A549 (cell line): ENCODE measurements at regions of chr11 and their contacts with region 1.

Region 1: DNA sequence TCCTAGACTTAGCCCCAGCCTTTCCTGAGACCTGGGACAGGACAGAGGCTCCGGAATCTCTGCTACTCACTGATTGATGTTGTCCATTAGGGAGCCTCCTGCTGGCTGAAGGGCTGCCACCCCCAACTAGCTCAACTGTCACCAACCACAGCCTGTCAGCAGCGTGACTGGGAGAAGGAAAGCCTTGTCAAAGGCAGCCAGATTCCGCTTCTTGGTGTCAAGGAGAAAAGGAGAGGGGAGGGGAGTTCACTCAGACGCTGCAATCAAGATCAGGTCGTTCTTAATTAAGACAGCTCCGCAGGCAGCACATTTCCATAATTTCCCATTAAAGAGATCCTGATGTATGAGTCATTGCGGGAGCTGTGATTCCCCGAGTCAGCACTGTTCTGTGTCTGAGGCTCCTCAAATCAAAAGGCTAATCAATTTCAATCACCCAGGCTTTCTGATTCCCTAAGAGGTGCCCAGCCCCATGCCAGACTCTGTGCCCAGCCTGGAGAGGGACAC is 152.8 kb upstream of the ZBED5 start:
- DNase-seq: peak; percentile 40 to 55
- ATAC-seq: peak; percentile 92 to 98
- H3K4me3 ChIP-seq: no peak overlapping the region
- H3K27ac ChIP-seq: peak overlapping the region in 1 of 2 experiments; percentile 47; a peak in 1 of 6 replicates
- H3K4me1 ChIP-seq: peaks cover 13% of the 10 kb centered on the region; the same call in 2 of the 3 replicates
- CTCF ChIP-seq: peak; percentile 36
- EP300 ChIP-seq: no peak
- POLR2A ChIP-seq: no peak
- RAD21 ChIP-seq: peak; percentile 49 to 58; a peak in 3 of 5 replicates

Region 2: DNA sequence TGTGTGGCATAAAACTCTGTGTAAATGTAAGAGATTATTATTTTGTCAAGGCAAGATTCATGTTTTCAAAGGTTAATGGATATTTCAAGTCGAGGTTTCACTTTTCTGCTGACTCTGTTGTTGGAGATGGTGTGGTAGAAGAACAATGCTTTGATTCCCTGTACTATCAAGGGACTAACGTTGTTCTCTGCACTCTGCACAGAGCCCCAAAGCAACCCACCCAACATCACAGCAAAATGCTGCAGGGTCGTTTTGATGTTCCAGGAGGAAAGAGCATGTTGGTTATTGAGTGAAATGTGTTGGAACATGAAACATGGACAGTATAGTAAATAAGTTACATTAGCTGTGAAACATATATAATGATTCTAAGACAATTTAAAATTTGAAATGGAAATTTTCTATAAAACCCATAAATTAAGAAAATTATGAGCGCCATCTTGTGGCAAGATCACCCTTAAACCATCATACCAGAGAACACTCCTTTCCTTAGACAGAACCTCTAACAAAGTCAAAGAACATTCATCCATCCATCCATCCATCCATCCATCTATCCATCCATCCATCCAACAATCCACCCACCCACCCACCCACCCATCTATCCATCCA is 11.6 kb after region 1 on chr11:
- CTCF ChIA-PET with region 1: interaction called, 47 read pairs
- POLR2A ChIA-PET with region 1: no interaction called
- DNase-seq: peak; percentile 16 to 55
- ATAC-seq: peak; percentile 48 to 77; a peak in 3 of 6 replicates
- H3K4me3 ChIP-seq: no peak overlapping the region
- H3K27ac ChIP-seq: peak overlapping the region; percentile 18 to 20; a peak in 2 of 6 replicates
- H3K4me1 ChIP-seq: peaks cover 9% of the 10 kb centered on the region
- CTCF ChIP-seq: peak; percentile 76
- EP300 ChIP-seq: no peak
- POLR2A ChIP-seq: no peak
- RAD21 ChIP-seq: peak; percentile 78 to 86

Region 3: DNA sequence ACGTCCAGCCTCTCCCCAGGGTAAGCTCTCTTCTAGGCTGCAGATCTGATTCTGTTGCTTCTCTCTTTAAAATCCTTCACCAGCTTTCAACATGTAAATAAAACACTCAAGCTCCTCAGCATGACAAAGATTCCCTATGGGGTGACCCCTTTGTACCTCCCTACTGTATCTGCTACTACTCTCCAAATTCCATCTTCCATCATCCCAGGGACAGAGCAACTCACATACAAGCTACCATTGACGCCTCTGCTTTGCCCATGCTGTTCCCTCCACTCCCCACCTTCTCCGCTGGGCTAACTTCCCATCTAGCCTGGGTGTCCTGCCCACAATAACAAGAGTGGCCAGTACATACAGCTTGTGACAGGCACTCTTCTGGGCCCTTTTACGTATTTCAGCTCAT is 54.7 kb after region 1 on chr11:
- CTCF ChIA-PET with region 1: no interaction called
- POLR2A ChIA-PET with region 1: no interaction called
- DNase-seq: no peak
- ATAC-seq: no peak
- H3K4me3 ChIP-seq: no peak overlapping the region
- H3K27ac ChIP-seq: no peak overlapping the region
- H3K4me1 ChIP-seq: no peaks in the 10 kb centered on the region
- CTCF ChIP-seq: no peak
- EP300 ChIP-seq: no peak
- POLR2A ChIP-seq: no peak
- RAD21 ChIP-seq: no peak

Region 4: GRCh38 chr11:11382824-11383532 is 372.3 kb after region 1 on chr11:
- CTCF ChIA-PET with region 1: no interaction called
- POLR2A ChIA-PET with region 1: no interaction called
- DNase-seq: no peak
- ATAC-seq: no peak
- H3K4me3 ChIP-seq: no peak overlapping the region
- H3K27ac ChIP-seq: no peak overlapping the region
- H3K4me1 ChIP-seq: no peaks in the 10 kb centered on the region
- CTCF ChIP-seq: no peak
- EP300 ChIP-seq: no peak
- POLR2A ChIP-seq: no peak
- RAD21 ChIP-seq: no peak